Lower leg skin (tissue), 4 donors: ENCODE measurements at regions of chr7 and their contacts with region 1.

Region 1: GRCh38 chr7:118826246-118826645 is 601.7 kb downstream of the ANKRD7 start:
- DNase-seq: no peak
- H3K4me3 ChIP-seq: no peak overlapping the region
- CTCF ChIP-seq: no peak
- POLR2A ChIP-seq: no peak

Region 2: GRCh38 chr7:118194571-118194970 is 631.7 kb before region 1 on chr7:
- intact Hi-C with region 1: loop called (anchors 5 kb)
- DNase-seq: no peak
- H3K4me3 ChIP-seq: no peak overlapping the region
- CTCF ChIP-seq: no peak
- POLR2A ChIP-seq: no peak

Region 3: DNA sequence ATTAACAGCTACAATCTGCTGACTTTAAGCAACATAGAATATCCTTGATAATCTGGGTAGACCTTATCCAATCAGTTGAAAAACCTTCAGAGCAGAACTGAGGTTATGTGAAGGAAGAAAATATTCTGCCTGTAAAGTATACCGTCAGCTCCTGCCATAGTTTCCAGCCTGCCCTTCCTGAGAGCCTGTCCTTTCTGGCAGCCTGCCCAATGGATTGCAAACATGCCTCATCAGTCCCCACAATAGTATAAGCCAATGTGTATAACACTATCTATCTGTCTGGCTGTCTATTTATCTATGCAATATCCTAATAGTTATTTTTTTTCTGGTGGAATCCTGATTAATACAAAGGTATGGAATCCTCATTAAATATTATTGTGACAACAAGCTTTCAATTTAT is 957.6 kb after region 1 on chr7:
- intact Hi-C with region 1: loop called (anchors 5 kb)
- DNase-seq: no peak
- H3K4me3 ChIP-seq: no peak overlapping the region
- CTCF ChIP-seq: no peak
- POLR2A ChIP-seq: no peak